Dendritic cell treated with granulocyte-macrophage colony-stimulating factor and Interleukin-4, amounts not matched to agents 40 ng/mL and 50 ng/mL, for 4 days (primary cell): ENCODE measurements at regions of chr9 and their contacts with region 1.

Region 1: GRCh38 chr9:81737853-81738507 is 48.6 kb upstream of the TLE1 start:
- H3K4me3 Mint-ChIP-seq: no peak overlapping the region
- H3K27ac Mint-ChIP-seq: peak overlapping the region; percentile 77
- H3K4me1 Mint-ChIP-seq: peaks cover 23% of the 10 kb centered on the region
- H3K27me3 Mint-ChIP-seq: no peaks in the 10 kb centered on the region

Region 2: GRCh38 chr9:81410197-81410596 is 327.8 kb before region 1 on chr9:
- intact Hi-C with region 1: no loop called
- H3K4me3 Mint-ChIP-seq: no peak overlapping the region
- H3K27ac Mint-ChIP-seq: no peak overlapping the region
- H3K4me1 Mint-ChIP-seq: peaks cover 21% of the 10 kb centered on the region
- H3K27me3 Mint-ChIP-seq: no peaks in the 10 kb centered on the region

Region 3: GRCh38 chr9:81689343-81690190 is 48.4 kb before region 1 on chr9 and contains the start of gene TLE1:
- intact Hi-C with region 1: loop called (anchors 1 kb)
- H3K4me3 Mint-ChIP-seq: peak within 1 kb of the TSS; percentile 99
- H3K27ac Mint-ChIP-seq: peak within 1 kb of the TSS; percentile 74
- H3K4me1 Mint-ChIP-seq: peaks cover 28% of the 10 kb centered on the region
- H3K27me3 Mint-ChIP-seq: peaks cover 58% of the 10 kb centered on the region

Region 4: GRCh38 chr9:81759668-81760215 is 21.8 kb after region 1 on chr9:
- intact Hi-C with region 1: loop called (anchors 1 kb)
- H3K4me3 Mint-ChIP-seq: no peak overlapping the region
- H3K27ac Mint-ChIP-seq: no peak overlapping the region
- H3K4me1 Mint-ChIP-seq: no peaks in the 10 kb centered on the region
- H3K27me3 Mint-ChIP-seq: no peaks in the 10 kb centered on the region

Region 5: GRCh38 chr9:81771571-81771970 is 33.6 kb after region 1 on chr9:
- intact Hi-C with region 1: no loop called
- H3K4me3 Mint-ChIP-seq: no peak overlapping the region
- H3K27ac Mint-ChIP-seq: no peak overlapping the region
- H3K4me1 Mint-ChIP-seq: no peaks in the 10 kb centered on the region
- H3K27me3 Mint-ChIP-seq: no peaks in the 10 kb centered on the region

Region 6: DNA sequence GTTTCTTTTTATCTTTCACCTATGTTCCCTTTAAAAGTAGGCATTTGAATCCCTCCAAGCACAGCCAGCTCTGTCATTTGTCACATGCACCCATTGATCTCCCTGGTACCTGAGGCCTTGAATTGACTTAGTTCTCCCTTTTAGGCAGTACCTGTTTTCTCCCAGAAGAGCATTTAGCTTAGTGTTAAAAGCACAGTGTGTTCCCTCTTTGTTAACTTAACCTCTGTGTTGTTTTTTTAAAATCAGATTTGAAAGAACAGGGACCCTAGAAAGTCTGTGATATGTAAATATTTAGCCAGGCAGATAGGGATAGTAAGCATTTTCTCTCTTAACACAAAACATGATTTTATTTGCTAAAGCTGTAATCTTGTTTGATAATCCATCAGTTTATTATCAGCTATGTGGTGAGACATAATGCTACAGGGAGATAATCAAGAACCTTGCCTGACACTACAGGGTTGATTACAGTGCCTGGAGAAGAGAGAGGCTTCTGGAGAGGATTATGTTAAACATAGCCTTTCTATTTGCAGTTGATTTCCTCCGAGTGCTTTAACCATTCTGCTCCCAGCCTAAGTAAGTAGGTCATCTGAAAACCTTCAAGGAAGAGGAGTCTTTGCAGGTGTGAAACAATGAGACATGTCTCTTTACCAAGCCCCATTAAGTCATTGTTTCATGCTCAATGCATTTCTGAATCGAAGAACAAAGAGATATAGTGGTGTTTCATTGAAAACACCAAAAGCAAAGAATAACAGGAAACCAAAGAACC is 76.6 kb after region 1 on chr9:
- intact Hi-C with region 1: no loop called
- H3K4me3 Mint-ChIP-seq: no peak overlapping the region
- H3K27ac Mint-ChIP-seq: no peak overlapping the region
- H3K4me1 Mint-ChIP-seq: no peaks in the 10 kb centered on the region
- H3K27me3 Mint-ChIP-seq: no peaks in the 10 kb centered on the region